Transverse colon (tissue), 4 donors: ENCODE measurements at regions of chr3 and their contacts with region 1.

Region 1: GRCh38 chr3:49906004-49906743 is 2.5 kb upstream of the MST1R start:
- DNase-seq: peak; percentile 87
- H3K4me3 ChIP-seq: peak overlapping the region in 3 of 4 donors; percentile 16 to 39 (median 23)
- H3K27ac ChIP-seq: peak overlapping the region; percentile 83 to 86 (median 85)
- H3K4me1 ChIP-seq: peaks cover 23 to 57% (median 52%) of the 10 kb centered on the region in 4 donors
- H3K27me3 ChIP-seq: no peaks in the 10 kb centered on the region
- CTCF ChIP-seq: peak; percentile 61 to 85 (median 67)
- EP300 ChIP-seq: no peak
- POLR2A ChIP-seq: peak; percentile 84

Region 2: GRCh38 chr3:49703443-49703927 is 202.7 kb before region 1 on chr3:
- in situ Hi-C with region 1: no loop called
- intact Hi-C with region 1: loop called (anchors 10 kb)
- DNase-seq: peak; percentile 69
- H3K4me3 ChIP-seq: no peak overlapping the region
- H3K27ac ChIP-seq: no peak overlapping the region
- H3K4me1 ChIP-seq: no peaks in the 10 kb centered on the region
- H3K27me3 ChIP-seq: no peaks in the 10 kb centered on the region
- CTCF ChIP-seq: peak; percentile 71 to 85 (median 83)
- EP300 ChIP-seq: no peak
- POLR2A ChIP-seq: no peak

Region 3: DNA sequence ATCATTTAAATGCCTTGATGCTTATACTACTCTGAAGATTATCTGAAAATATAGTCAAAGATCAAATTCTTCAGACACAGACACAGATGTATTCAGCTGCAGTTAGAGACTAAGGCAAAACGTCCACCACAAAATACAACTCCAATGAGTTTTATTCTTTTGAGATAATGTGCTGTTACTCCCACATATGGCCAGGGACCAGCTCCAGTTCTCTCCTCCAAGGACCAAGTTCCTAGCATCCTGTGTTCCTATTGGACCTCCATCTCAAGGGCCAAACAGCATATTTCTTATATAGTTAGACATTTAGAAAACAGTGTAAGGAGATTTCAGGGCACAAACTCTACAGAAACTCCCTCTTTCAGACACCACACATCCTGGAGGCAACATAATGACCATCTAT is 146.9 kb before region 1 on chr3:
- in situ Hi-C with region 1: no loop called
- intact Hi-C with region 1: no loop called
- DNase-seq: no peak
- H3K4me3 ChIP-seq: no peak overlapping the region
- H3K27ac ChIP-seq: no peak overlapping the region
- H3K4me1 ChIP-seq: peaks cover 0 to 3% (median 0%) of the 10 kb centered on the region in 4 donors
- H3K27me3 ChIP-seq: no peaks in the 10 kb centered on the region
- CTCF ChIP-seq: no peak
- EP300 ChIP-seq: no peak
- POLR2A ChIP-seq: no peak

Region 4: DNA sequence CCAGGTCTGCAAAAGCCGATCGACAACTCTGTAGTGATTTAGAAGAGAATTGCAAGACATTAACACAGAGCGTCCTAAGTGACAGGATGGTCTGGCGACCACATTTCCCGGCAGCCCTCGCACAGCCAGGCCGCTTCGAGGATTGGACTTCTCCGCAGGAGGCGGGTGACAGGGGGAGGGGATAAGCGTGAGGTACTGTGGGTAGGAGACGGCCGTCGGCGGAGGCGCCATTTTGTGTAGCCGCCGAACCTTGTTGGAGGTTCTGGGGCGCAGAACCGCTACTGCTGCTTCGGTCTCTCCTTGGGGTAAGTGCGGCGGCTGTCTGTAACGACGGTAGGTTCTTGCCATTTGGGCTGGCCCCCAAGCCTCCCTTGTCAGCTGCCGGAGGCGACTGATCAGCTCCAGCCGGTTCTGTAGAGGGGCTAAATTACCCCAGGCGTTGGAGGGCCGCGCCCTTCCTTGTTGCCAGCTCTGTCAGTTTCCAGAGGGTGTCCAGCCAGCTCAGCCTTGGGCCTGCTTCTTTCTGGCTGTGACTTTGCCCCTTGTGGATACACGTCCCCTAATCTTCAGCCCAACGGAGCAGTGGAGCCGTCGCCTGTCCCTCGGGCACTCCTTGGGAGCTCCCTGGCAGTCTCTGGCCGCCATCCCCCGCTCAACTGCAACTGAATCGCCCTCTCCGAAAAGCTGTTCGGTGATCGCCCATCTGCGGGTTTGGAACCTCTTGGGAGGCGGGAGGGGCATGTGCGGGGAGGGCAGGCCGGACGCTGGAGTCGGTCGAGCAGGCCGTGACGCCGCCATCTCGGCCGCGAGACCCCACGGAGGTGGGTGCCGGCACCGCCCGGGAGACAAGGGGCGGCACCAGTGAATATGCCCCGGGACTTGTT is 182.8 kb after region 1 on chr3 and contains the start of gene RBM5:
- in situ Hi-C with region 1: no loop called
- intact Hi-C with region 1: no loop called
- DNase-seq: peak; percentile 93
- H3K4me3 ChIP-seq: peak within 1 kb of the TSS; percentile 80 to 95 (median 89)
- H3K27ac ChIP-seq: peak within 1 kb of the TSS; percentile 92 to 97 (median 94)
- H3K4me1 ChIP-seq: peaks cover 13 to 23% (median 17%) of the 10 kb centered on the region in 4 donors
- H3K27me3 ChIP-seq: no peaks in the 10 kb centered on the region
- CTCF ChIP-seq: no peak
- EP300 ChIP-seq: no peak
- POLR2A ChIP-seq: peak; percentile 66
- total RNA-seq, gene RBM5: 238 to 391 (median 304) TPM